HepG2 (cell line): ENCODE measurements at regions of chr6 and their contacts with region 1.

Region 1: GRCh38 chr6:109073344-109074132 is 21.1 kb downstream of the SESN1 start:
- DNase-seq: peak; percentile 67
- ATAC-seq: peak; percentile 48
- H3K4me3 ChIP-seq: no peak overlapping the region
- H3K27ac ChIP-seq: no peak overlapping the region
- H3K4me1 ChIP-seq: peaks cover 6% of the 10 kb centered on the region; the same call in 1 of the 2 replicates
- H3K27me3 ChIP-seq: no peaks in the 10 kb centered on the region
- CTCF ChIP-seq: peak; percentile 76
- EP300 ChIP-seq: no peak
- POLR2A ChIP-seq: no peak
- RAD21 ChIP-seq: peak; percentile 75; the same call in 1 of the 2 replicates

Region 2: DNA sequence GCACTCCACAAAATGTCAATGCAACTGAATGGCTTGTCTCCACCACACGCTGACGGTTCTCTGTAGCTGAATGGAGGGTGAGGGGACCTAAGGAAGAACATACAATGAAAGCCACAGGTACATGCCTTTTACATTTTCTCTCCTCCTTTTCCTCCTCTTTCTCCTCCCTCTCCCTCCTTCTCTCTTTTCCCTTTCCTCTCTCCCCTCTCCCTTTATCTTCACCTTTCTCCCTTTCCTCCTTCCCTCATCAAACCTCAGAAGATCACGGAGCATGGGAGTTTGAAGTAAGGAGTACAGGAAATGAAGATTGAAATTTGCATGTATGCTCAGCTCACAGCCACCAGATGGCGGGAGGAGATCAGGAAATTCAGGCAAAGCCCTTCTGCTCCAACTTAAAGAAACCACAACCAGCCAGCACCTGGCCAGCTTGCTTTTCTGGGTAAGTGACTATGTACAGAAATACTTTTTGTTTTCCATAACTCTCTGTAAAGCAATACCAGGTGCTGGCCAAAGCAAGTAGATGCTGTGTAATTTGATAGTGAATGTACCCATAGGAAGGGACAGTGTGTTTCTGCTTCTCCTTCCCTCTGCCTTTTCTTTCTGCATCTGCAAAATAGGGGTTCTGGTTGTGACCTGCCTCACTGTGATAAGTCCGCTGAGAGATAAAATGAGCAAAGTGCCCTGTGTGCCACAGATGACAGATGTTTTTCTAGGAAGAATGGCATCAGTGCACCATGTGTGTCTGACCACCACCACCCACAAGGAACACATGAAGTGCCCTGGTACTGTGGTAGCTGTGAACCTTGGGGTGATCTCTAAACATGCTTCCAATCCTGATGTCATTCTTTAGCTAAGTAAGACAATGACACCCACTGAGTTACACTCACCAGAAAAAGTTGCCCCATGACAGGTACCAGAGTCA is 531.4 kb before region 1 on chr6:
- CTCF ChIA-PET with region 1: interaction called, 9 read pairs
- POLR2A ChIA-PET with region 1: no interaction called
- in situ Hi-C with region 1: loop called (anchors 5 kb)
- intact Hi-C with region 1: loop called (anchors 1 kb)
- DNase-seq: peak; percentile 51
- ATAC-seq: peak; percentile 84
- H3K4me3 ChIP-seq: no peak overlapping the region
- H3K27ac ChIP-seq: no peak overlapping the region
- H3K4me1 ChIP-seq: peaks cover 15% of the 10 kb centered on the region
- H3K27me3 ChIP-seq: peaks cover 0 to 11% of the 10 kb centered on the region in 2 experiments; a peak in 1 of 5 replicates
- CTCF ChIP-seq: peak; percentile 92
- EP300 ChIP-seq: no peak
- POLR2A ChIP-seq: no peak
- RAD21 ChIP-seq: peak; percentile 86

Region 3: DNA sequence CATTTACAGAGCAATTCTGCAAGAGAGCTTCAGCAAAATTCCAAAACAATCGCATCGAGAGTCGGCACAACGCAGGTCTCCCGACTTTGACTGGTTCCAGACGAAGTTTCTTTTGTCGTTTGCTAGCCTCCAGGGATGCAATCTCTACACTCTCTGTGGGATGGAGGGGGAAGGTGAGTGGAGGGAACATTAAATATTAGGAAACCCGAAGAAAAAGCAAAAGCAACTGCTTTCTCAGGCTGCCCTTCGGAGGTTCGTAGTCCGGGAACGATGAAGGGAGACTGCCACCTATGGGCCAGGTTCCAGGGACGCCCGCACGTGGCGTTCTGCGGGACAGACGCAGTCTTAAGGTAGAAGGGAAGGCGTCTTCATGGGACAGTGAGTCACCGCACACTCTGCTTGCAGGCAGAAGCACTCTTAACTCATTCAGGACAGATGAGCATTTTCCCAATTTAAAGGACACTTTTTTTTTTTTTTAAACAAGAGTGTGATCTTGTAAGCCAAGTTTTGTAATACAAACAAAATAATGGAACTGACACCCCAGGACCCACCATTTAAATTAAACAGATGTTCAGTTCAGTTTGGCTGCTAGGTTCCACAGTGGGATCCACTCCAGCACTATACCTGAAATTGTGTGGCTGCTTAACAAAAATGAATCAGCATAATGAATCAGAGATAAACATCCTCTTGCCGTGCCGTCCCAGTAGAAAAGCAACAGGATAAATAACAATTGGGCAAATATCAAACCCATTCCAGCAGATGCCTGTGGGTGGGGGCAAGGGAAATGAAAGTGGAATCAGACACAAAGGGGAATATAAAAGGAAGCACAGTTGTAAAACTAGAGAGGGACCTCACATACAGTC is 291.1 kb before region 1 on chr6:
- CTCF ChIA-PET with region 1: no interaction called
- POLR2A ChIA-PET with region 1: no interaction called
- in situ Hi-C with region 1: no loop called
- intact Hi-C with region 1: loop called (anchors 5 kb)
- DNase-seq: peak; percentile 40
- ATAC-seq: peak; percentile 91
- H3K4me3 ChIP-seq: peak overlapping the region; percentile 49 to 85 (median 73)
- H3K27ac ChIP-seq: no peak overlapping the region
- H3K4me1 ChIP-seq: peaks cover 63% of the 10 kb centered on the region
- H3K27me3 ChIP-seq: no peaks in the 10 kb centered on the region
- CTCF ChIP-seq: peak; percentile 96
- EP300 ChIP-seq: no peak
- POLR2A ChIP-seq: no peak
- RAD21 ChIP-seq: peak; percentile 86

Region 4: DNA sequence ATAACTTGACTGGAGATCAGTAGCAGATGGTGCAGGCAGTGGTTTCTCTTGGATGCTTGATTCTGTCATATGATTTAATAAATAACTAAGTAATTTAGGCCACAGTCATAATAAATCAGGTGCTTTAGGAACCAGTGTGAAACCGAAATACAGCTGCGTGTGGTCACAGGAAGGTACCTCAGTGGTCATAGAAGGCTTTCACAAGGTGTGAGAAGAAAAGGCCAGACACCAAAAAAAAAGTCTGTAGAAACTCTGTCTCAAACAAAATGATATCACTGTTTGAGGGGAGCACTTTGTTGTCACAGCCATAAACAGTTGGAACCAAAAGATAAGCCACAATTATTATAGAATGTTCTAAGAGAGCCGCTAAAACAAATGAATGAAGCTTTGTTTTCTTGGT is 168.8 kb before region 1 on chr6:
- CTCF ChIA-PET with region 1: no interaction called
- POLR2A ChIA-PET with region 1: no interaction called
- in situ Hi-C with region 1: no loop called
- intact Hi-C with region 1: loop called (anchors 5 kb)
- DNase-seq: peak; percentile 26
- ATAC-seq: no peak
- H3K4me3 ChIP-seq: no peak overlapping the region
- H3K27ac ChIP-seq: no peak overlapping the region
- H3K4me1 ChIP-seq: peaks cover 15% of the 10 kb centered on the region
- H3K27me3 ChIP-seq: peaks cover 1 to 12% of the 10 kb centered on the region in 2 experiments; a peak in 2 of 5 replicates
- CTCF ChIP-seq: no peak
- EP300 ChIP-seq: no peak
- POLR2A ChIP-seq: no peak
- RAD21 ChIP-seq: no peak

Region 5: GRCh38 chr6:108914235-108915022 is 159.1 kb before region 1 on chr6:
- CTCF ChIA-PET with region 1: interaction called, 18 read pairs
- POLR2A ChIA-PET with region 1: no interaction called
- in situ Hi-C with region 1: loop called (anchors 10 kb)
- intact Hi-C with region 1: no loop called
- DNase-seq: peak; percentile 52
- ATAC-seq: peak; percentile 84
- H3K4me3 ChIP-seq: no peak overlapping the region
- H3K27ac ChIP-seq: no peak overlapping the region
- H3K4me1 ChIP-seq: no peaks in the 10 kb centered on the region
- H3K27me3 ChIP-seq: peaks cover 0 to 10% of the 10 kb centered on the region in 2 experiments; a peak in 3 of 5 replicates
- CTCF ChIP-seq: peak; percentile 80
- EP300 ChIP-seq: no peak
- POLR2A ChIP-seq: no peak
- RAD21 ChIP-seq: peak; percentile 64

Region 6: GRCh38 chr6:109009236-109009961 is 64.1 kb before region 1 on chr6:
- CTCF ChIA-PET with region 1: no interaction called
- POLR2A ChIA-PET with region 1: no interaction called
- in situ Hi-C with region 1: no loop called
- intact Hi-C with region 1: loop called (anchors 5 kb)
- DNase-seq: peak; percentile 72
- ATAC-seq: peak; percentile 98
- H3K4me3 ChIP-seq: peak overlapping the region; percentile 74 to 98 (median 97)
- H3K27ac ChIP-seq: peak overlapping the region; percentile 79
- H3K4me1 ChIP-seq: peaks cover 42% of the 10 kb centered on the region
- H3K27me3 ChIP-seq: no peaks in the 10 kb centered on the region; a peak in 2 of 5 replicates
- CTCF ChIP-seq: no peak
- EP300 ChIP-seq: no peak
- POLR2A ChIP-seq: peak; percentile 54 to 79
- RAD21 ChIP-seq: 0 out of 2 replicates have a peak, but pooled peaks have one; percentile 64

Region 7: GRCh38 chr6:109087661-109088264 is 14.2 kb after region 1 on chr6:
- CTCF ChIA-PET with region 1: no interaction called
- POLR2A ChIA-PET with region 1: no interaction called
- in situ Hi-C with region 1: no loop called
- intact Hi-C with region 1: no loop called
- DNase-seq: no peak
- ATAC-seq: no peak
- H3K4me3 ChIP-seq: no peak overlapping the region
- H3K27ac ChIP-seq: no peak overlapping the region
- H3K4me1 ChIP-seq: peaks cover 50% of the 10 kb centered on the region
- H3K27me3 ChIP-seq: no peaks in the 10 kb centered on the region
- CTCF ChIP-seq: no peak
- EP300 ChIP-seq: no peak
- POLR2A ChIP-seq: no peak
- RAD21 ChIP-seq: no peak